Gastrocnemius medialis (tissue), 4 donors: ENCODE measurements at regions of chr4 and their contacts with region 1.

Region 1: GRCh38 chr4:143335979-143336780 is 496 bp upstream of the GAB1 start:
- DNase-seq: peak; percentile 85 to 87
- ATAC-seq: peak; percentile 81 to 83
- H3K4me3 ChIP-seq: peak overlapping the region; percentile 83 to 96 (median 90)
- H3K27ac ChIP-seq: peak overlapping the region; percentile 96 to 99 (median 98)
- H3K4me1 ChIP-seq: peaks cover 33 to 37% of the 10 kb centered on the region in 2 donors
- H3K27me3 ChIP-seq: no peaks in the 10 kb centered on the region
- CTCF ChIP-seq: no peak
- POLR2A ChIP-seq: peak; percentile 39 to 66

Region 2: GRCh38 chr4:142866685-142867084 is 469.5 kb before region 1 on chr4:
- in situ Hi-C with region 1: no loop called
- intact Hi-C with region 1: no loop called
- DNase-seq: no peak
- ATAC-seq: no peak
- H3K4me3 ChIP-seq: no peak overlapping the region
- H3K27ac ChIP-seq: no peak overlapping the region
- H3K4me1 ChIP-seq: no peaks in the 10 kb centered on the region
- H3K27me3 ChIP-seq: no peaks in the 10 kb centered on the region
- CTCF ChIP-seq: no peak
- POLR2A ChIP-seq: no peak

Region 3: DNA sequence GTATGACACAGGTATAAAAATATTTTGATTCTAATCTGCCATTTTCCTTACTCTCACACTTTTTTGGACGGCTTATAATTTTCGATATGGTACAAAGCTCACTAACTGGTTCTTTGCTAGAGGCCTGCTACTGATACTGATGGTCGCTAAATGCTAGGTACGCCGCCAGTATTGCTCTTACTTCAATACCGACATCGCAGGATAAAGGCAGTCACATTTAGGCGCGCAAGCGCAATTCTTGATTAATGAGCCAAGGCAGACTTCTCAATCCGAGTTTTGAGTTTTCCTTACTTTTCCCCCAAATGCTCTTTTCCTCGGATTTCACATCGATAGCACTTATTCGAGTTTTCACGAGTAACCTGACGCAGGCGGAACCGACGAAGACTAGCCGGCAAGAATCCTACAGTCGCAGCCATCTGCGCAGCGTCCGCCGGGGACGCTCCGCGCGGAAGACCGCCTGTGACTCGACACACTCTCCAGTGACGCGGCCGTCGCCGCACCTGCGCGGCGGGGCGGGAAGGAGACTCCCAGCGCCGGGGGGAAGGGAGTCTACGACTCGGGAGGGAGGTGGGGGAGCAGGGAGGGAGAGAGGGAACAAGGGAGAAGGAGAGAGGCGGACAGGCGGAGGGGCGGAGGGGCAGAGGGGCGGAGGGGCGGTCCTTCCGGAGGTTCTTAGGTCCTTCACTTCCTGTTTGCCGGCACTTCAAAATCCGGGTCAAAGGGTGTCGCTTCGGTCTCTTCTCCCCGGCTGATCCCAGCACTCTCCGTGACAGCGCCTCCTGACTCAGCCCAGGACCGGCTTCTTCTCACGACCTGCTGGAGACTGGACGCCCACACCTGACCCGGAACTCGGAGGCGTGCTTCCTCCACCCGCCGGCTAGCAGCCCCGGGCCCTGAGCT is 151.7 kb before region 1 on chr4 and contains the start of gene USP38:
- in situ Hi-C with region 1: no loop called
- intact Hi-C with region 1: loop called (anchors 2 kb)
- DNase-seq: peak; percentile 94 to 96
- ATAC-seq: peak; percentile 81 to 93
- H3K4me3 ChIP-seq: peak within 1 kb of the TSS; percentile 73 to 94 (median 91)
- H3K27ac ChIP-seq: peak within 1 kb of the TSS; percentile 95 to 98 (median 96)
- H3K4me1 ChIP-seq: peaks cover 29 to 37% of the 10 kb centered on the region in 2 donors
- H3K27me3 ChIP-seq: no peaks in the 10 kb centered on the region
- CTCF ChIP-seq: peak in 2 of 5 experiments; percentile 9 to 28
- POLR2A ChIP-seq: peak; percentile 82 to 91
- total RNA-seq, gene USP38: 63.6 to 142 (median 102) TPM

Region 4: DNA sequence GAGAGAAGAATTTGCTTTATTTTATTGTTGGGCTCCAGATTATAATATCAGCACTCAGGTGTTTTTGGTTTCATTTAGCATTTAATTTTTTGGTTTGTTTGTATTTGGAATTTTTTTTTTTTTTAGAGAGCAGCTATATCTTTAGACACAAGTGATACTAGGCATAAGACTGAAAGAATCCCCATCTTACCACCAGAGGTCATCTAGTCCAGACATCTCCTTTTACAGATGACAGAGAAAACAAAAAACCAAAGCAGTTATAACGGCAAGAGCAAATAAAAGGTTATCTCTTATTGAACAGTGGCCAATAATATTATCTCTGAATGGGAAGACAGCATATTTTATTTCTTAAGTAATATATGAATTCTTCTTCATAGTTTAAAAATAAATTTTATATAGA is 128.6 kb before region 1 on chr4:
- in situ Hi-C with region 1: no loop called
- intact Hi-C with region 1: loop called (anchors 5 kb)
- DNase-seq: no peak
- ATAC-seq: peak in 1 of 2 donors; percentile 68
- H3K4me3 ChIP-seq: no peak overlapping the region
- H3K27ac ChIP-seq: peak overlapping the region in 3 of 4 donors; percentile 6 to 57 (median 53)
- H3K4me1 ChIP-seq: peaks cover 34 to 50% of the 10 kb centered on the region in 2 donors
- H3K27me3 ChIP-seq: no peaks in the 10 kb centered on the region
- CTCF ChIP-seq: peak in 3 of 5 experiments; percentile 16 to 43 (median 33)
- POLR2A ChIP-seq: no peak

Region 5: DNA sequence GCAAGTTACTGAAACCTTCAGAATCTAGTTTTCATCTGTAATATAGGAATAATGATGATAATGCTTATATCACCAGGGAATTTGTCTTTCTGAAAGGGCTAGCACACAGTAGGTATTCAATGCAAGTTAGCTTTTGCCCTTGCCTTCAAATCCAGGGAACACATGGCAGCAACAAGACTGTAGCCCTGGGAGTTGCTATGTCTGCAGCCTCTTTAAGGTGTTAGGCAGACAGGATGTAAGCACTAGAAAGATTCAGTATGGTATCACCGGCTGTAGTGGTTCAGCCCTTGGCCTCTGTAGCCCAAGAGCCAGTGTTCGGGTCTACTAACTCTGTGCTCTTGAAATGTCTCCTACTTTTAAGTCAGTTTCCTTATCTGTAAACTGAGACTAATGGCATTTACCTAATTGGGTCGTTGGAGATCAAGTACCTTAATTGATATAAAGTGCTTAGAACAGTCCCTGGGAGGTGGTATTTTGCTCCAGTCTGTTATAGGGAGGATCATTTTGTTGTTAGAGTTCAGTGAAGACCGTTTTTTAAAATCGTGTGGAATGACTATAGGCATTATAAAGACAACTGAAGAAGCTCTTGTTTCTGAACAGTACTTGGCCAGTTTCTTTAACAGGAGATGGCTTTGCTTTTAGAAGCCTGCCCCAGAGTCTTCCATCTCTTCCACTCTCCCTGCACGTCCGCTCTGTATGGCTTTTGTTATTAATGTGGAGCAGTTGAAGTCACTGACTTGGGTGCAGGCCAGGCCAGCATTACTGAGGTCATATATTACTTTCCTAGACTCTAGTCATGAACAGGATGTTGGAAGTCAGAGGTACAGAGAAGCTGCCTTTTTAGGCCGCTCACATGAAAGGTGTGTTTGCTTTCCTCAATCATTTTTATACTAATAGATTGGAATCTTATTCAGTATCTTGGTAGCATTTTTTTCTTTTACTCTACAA is 45.3 kb after region 1 on chr4:
- in situ Hi-C with region 1: loop called in 1 of 4 experiments (anchors 5 kb)
- intact Hi-C with region 1: loop called (anchors 2 kb)
- DNase-seq: peak; percentile 65 to 70
- ATAC-seq: peak; percentile 44 to 56
- H3K4me3 ChIP-seq: peak overlapping the region in 2 of 4 donors; percentile 21 to 39
- H3K27ac ChIP-seq: peak overlapping the region; percentile 69 to 92 (median 86)
- H3K4me1 ChIP-seq: peaks cover 88 to 93% of the 10 kb centered on the region in 2 donors
- H3K27me3 ChIP-seq: no peaks in the 10 kb centered on the region
- CTCF ChIP-seq: no peak
- POLR2A ChIP-seq: peak in 1 of 2 donors; percentile 50

Region 6: DNA sequence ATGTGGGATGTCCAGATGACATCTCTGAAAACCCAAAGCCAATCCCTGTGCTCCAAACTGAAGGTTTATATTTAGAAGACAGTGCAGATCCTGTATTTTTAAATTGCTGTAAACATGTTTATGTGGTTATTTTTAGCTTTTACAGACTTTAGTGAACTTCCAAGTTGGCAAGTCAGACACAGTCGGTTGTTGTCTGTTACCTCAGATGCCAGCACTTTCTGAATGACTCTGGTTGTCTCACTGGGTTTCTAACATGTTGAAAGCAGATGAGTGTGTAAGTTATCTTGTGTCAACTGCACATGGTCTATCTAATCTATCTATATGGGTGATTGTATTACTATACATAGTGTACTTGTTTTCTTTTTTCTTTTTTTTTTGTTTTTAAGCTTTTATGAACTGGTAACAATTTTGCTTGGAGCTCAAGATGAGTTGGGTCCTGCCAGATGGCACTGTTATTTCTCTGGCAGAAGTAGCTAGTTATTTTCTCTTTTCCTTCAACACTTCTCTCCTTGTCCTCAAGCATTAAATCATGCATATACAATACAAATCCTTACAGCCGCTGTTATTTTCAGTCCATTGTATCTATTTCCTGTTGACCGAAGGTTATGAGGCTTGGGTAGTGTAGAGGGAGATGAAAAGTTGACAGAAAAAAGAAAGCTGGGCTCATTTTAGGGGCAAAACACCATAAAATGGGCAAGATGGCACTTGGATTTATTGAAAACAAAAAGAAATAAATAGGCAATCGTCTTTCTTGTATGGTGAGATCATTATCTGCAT is 66.8 kb after region 1 on chr4:
- in situ Hi-C with region 1: no loop called
- intact Hi-C with region 1: loop called (anchors 2 kb)
- DNase-seq: peak; percentile 64 to 74
- ATAC-seq: peak; percentile 94 to 95
- H3K4me3 ChIP-seq: peak overlapping the region; percentile 26 to 42 (median 30)
- H3K27ac ChIP-seq: peak overlapping the region; percentile 80 to 95 (median 86)
- H3K4me1 ChIP-seq: peaks cover 89 to 90% of the 10 kb centered on the region in 2 donors
- H3K27me3 ChIP-seq: no peaks in the 10 kb centered on the region
- CTCF ChIP-seq: no peak
- POLR2A ChIP-seq: peak in 1 of 2 donors; percentile 42

Region 7: GRCh38 chr4:143482840-143483239 is 146.7 kb after region 1 on chr4:
- in situ Hi-C with region 1: loop called in 1 of 4 experiments (anchors 25 kb)
- intact Hi-C with region 1: loop called (anchors 10 kb)
- DNase-seq: no peak
- ATAC-seq: peak; percentile 50 to 62
- H3K4me3 ChIP-seq: no peak overlapping the region
- H3K27ac ChIP-seq: no peak overlapping the region
- H3K4me1 ChIP-seq: no peaks in the 10 kb centered on the region
- H3K27me3 ChIP-seq: no peaks in the 10 kb centered on the region
- CTCF ChIP-seq: peak; percentile 57 to 75 (median 61)
- POLR2A ChIP-seq: no peak

Region 8: GRCh38 chr4:143513306-143514168 is 177.4 kb after region 1 on chr4 and contains the start of gene SMARCA5:
- in situ Hi-C with region 1: no loop called
- intact Hi-C with region 1: loop called (anchors 1 kb)
- DNase-seq: peak; percentile 95 to 97
- ATAC-seq: peak; percentile 92 to 95
- H3K4me3 ChIP-seq: peak within 1 kb of the TSS; percentile 77 to 92 (median 86)
- H3K27ac ChIP-seq: peak within 1 kb of the TSS; percentile 91 to 96 (median 94)
- H3K4me1 ChIP-seq: peaks cover 38 to 44% of the 10 kb centered on the region in 2 donors
- H3K27me3 ChIP-seq: no peaks in the 10 kb centered on the region
- CTCF ChIP-seq: no peak
- POLR2A ChIP-seq: peak; percentile 89 to 95
- total RNA-seq, gene SMARCA5: 19.7 to 27.8 (median 26.7) TPM